Activated naive CD4-positive, alpha-beta T cell treated with anti-CD3 and anti-CD28 coated beads for 36 hours (primary cell): ENCODE measurements at regions of chr1 and their contacts with region 1.

Region 1: GRCh38 chr1:224434691-224435317 is at the start of gene WDR26:
- DNase-seq: peak; percentile 91
- H3K4me3 Mint-ChIP-seq: peak within 1 kb of the TSS; percentile 95
- H3K27ac Mint-ChIP-seq: peak within 1 kb of the TSS; percentile 95
- H3K4me1 Mint-ChIP-seq: peaks cover 46% of the 10 kb centered on the region
- H3K27me3 Mint-ChIP-seq: no peaks in the 10 kb centered on the region
- total RNA-seq, gene WDR26: 44.3 to 45.4 TPM

Region 2: GRCh38 chr1:223831755-223832636 is 602.8 kb before region 1 on chr1:
- CTCF ChIA-PET with region 1: no interaction called
- intact Hi-C with region 1: loop called (anchors 2 kb)
- DNase-seq: peak; percentile 14
- H3K4me3 Mint-ChIP-seq: peak overlapping the region; percentile 28
- H3K27ac Mint-ChIP-seq: peak overlapping the region; percentile 93
- H3K4me1 Mint-ChIP-seq: peaks cover 28% of the 10 kb centered on the region
- H3K27me3 Mint-ChIP-seq: no peaks in the 10 kb centered on the region

Region 3: GRCh38 chr1:224356685-224357625 is 77.8 kb before region 1 on chr1 and contains the start of gene CNIH4:
- CTCF ChIA-PET with region 1: no interaction called
- intact Hi-C with region 1: loop called (anchors 1 kb)
- DNase-seq: peak; percentile 94
- H3K4me3 Mint-ChIP-seq: peak within 1 kb of the TSS; percentile 89
- H3K27ac Mint-ChIP-seq: peak within 1 kb of the TSS; percentile 86
- H3K4me1 Mint-ChIP-seq: peaks cover 31% of the 10 kb centered on the region
- H3K27me3 Mint-ChIP-seq: no peaks in the 10 kb centered on the region
- total RNA-seq, gene CNIH4: 34.7 to 35.1 TPM

Region 4: GRCh38 chr1:224387943-224388342 is 46.9 kb before region 1 on chr1:
- CTCF ChIA-PET with region 1: no interaction called
- intact Hi-C with region 1: no loop called
- DNase-seq: no peak
- H3K4me3 Mint-ChIP-seq: no peak overlapping the region
- H3K27ac Mint-ChIP-seq: no peak overlapping the region
- H3K4me1 Mint-ChIP-seq: peaks cover 39% of the 10 kb centered on the region
- H3K27me3 Mint-ChIP-seq: no peaks in the 10 kb centered on the region

Region 5: DNA sequence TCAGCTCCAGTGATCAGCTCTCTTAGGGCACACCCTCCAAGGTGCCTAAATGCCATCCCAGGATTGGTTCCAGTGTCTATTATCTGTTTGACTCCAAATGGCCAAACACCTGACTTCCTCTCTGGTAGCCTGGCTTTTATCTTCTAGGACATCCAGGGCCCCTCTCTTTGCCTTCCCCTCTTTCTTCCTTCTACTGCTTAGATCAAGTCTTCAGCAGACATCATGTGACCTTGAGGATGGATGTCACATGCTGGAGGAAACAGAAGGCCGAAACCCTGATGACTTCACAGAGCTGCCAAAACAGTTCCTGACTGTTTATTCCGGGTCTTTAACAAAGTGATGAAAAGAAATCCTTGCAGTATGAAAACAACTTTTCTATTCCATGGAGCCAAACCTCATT is 24.2 kb after region 1 on chr1:
- CTCF ChIA-PET with region 1: interaction called, 17 read pairs
- intact Hi-C with region 1: loop called (anchors 1 kb)
- DNase-seq: no peak
- H3K4me3 Mint-ChIP-seq: no peak overlapping the region
- H3K27ac Mint-ChIP-seq: peak overlapping the region; percentile 41
- H3K4me1 Mint-ChIP-seq: peaks cover 13% of the 10 kb centered on the region
- H3K27me3 Mint-ChIP-seq: no peaks in the 10 kb centered on the region

Region 6: DNA sequence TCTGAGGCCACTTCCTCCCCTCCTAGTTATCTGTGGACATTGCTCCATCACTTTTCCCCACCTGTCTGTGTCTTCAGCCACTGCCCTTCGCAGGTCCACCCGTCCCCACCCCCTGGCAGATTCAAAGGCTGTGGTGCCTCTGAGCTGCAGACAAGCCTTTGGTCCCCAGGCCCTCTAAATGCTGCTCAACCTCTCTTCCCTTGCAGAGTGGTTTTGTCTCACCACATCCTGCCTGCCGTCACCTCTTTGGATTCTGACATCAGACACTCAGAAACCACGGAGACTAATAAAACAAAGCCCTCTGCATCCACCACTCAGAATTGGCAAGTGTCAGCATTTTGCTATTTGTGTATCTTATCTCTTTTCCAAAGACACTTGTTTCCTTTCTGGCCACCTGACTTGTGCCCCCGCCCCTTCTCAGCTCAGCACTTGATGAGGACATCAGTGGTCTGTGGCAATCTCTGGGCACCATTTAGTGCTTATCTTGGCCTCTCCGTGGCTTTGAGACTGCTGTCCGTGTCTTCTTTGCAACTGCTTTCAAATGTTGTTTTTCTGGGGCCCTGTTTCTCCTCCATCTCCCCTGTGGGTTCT is 189.0 kb after region 1 on chr1:
- CTCF ChIA-PET with region 1: no interaction called
- intact Hi-C with region 1: loop called (anchors 5 kb)
- DNase-seq: peak; percentile 92
- H3K4me3 Mint-ChIP-seq: peak overlapping the region; percentile 46
- H3K27ac Mint-ChIP-seq: peak overlapping the region; percentile 82
- H3K4me1 Mint-ChIP-seq: peaks cover 23% of the 10 kb centered on the region
- H3K27me3 Mint-ChIP-seq: peaks cover 25% of the 10 kb centered on the region